ENCODE measurements at regions of chr17 and their contacts with region 1.

Region 1: DNA sequence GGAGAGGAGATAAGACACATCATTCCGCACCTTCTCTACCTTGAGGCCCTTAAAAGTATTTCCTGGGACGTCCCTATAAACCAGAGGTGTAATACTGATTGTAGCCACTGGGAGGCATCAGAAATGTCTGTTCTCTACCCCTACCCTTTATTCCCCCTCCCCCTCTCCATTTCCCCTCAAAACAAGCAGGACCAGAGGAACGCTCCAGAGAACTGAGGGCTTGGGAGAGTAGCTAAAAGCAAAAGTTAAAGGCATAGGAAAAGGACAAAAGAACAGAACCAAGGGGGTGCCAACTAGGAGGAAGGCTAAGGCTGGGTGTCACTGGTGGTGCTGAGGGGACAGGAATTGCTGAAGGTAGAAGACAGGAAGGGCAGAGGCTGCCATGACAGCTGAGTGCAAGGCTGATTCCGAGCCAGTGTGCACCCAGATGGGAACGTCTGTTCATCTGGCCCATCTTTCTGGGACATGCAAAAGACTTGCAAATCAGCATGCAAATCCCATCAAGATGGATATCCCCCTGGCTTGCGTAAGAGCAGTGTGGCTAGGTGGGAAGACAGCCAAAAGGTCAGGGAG is 6.7 kb downstream of the CAMTA2 start:
- DNase-seq: peak; percentile 65 to 73
- ATAC-seq: peak; percentile 78 to 84
- H3K4me3 ChIP-seq: no peak overlapping the region
- H3K27ac ChIP-seq: no peak overlapping the region
- H3K4me1 ChIP-seq: peaks cover 2% of the 10 kb centered on the region; the same call in 2 of the 3 replicates
- CTCF ChIP-seq: peak; percentile 73
- EP300 ChIP-seq: no peak
- POLR2A ChIP-seq: no peak
- RAD21 ChIP-seq: peak; percentile 55 to 63

Region 2: GRCh38 chr17:4939796-4940624 is 40.7 kb before region 1 on chr17 and contains the starts of genes RNF167 and SLC25A11:
- CTCF ChIA-PET with region 1: interaction called, 33 read pairs
- POLR2A ChIA-PET with region 1: no interaction called
- DNase-seq: peak; percentile 99 to 100
- ATAC-seq: peak; percentile 80 to 81
- H3K4me3 ChIP-seq: peak within 1 kb of the TSS; percentile 85
- H3K27ac ChIP-seq: peak within 1 kb of the TSS; percentile 89 to 93
- H3K4me1 ChIP-seq: peaks cover 49% of the 10 kb centered on the region
- CTCF ChIP-seq: no peak
- EP300 ChIP-seq: no peak
- POLR2A ChIP-seq: peak; percentile 91
- RAD21 ChIP-seq: 0 out of 5 replicates have a peak, but pooled peaks of 1 of the 2 experiments have one; percentile 5
- polyA plus RNA-seq, gene RNF167: 98.7 and 110 TPM in 2 replicates
- polyA plus RNA-seq, gene SLC25A11: 60.2 and 64.4 TPM in 2 replicates

Region 3: GRCh38 chr17:4956493-4957061 is 24.2 kb before region 1 on chr17:
- CTCF ChIA-PET with region 1: interaction called, 28 read pairs
- POLR2A ChIA-PET with region 1: no interaction called
- DNase-seq: no peak
- ATAC-seq: no peak
- H3K4me3 ChIP-seq: no peak overlapping the region
- H3K27ac ChIP-seq: no peak overlapping the region
- H3K4me1 ChIP-seq: peaks cover 17% of the 10 kb centered on the region
- CTCF ChIP-seq: peak; percentile 24; the same call in 2 of the 3 replicates
- EP300 ChIP-seq: no peak
- POLR2A ChIP-seq: no peak
- RAD21 ChIP-seq: no peak

Region 4: DNA sequence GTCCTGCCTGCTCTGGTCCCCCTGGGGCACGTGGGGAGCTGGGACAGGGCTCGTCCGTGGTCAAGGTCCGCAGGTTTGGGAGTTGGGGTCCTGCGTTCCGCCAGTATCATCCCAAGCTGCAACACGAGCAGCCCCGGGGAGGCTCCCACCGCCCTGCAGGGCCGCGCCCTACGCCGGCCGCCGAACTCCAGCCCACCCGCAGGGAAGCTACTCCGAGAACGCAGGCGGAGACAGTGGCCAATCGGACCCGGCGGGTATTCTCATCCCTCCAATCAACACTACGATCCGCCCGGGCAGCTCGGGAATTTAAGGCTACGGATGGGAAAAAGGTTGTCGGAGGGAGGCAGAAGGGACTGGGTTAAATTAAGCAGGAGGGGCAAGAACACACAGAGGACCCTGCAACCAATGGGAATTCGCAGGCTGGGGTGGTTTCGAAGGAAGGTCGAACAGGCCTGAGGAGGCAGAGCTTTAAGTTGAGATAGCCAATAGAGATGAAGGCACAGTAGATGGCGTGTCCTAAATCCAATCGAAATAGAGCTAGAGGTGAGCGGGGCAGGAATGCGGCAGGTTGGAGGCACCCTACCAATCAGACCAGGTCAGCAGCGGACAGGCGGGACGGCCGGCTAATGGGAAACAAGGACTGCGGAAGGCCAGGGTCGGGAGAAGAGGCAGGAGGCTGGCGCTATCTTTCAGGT is 13.7 kb before region 1 on chr17:
- CTCF ChIA-PET with region 1: interaction called, 148 read pairs
- POLR2A ChIA-PET with region 1: interaction called, 11 read pairs
- DNase-seq: peak; percentile 100
- ATAC-seq: peak; percentile 89 to 95
- H3K4me3 ChIP-seq: peak overlapping the region; percentile 63
- H3K27ac ChIP-seq: peak overlapping the region; percentile 94 to 95
- H3K4me1 ChIP-seq: peaks cover 21% of the 10 kb centered on the region
- CTCF ChIP-seq: no peak
- EP300 ChIP-seq: no peak
- POLR2A ChIP-seq: peak; percentile 59; the same call in 1 of the 2 replicates
- RAD21 ChIP-seq: peak in 1 of 2 experiments; percentile 10; a peak in 1 of 5 replicates

Region 5: DNA sequence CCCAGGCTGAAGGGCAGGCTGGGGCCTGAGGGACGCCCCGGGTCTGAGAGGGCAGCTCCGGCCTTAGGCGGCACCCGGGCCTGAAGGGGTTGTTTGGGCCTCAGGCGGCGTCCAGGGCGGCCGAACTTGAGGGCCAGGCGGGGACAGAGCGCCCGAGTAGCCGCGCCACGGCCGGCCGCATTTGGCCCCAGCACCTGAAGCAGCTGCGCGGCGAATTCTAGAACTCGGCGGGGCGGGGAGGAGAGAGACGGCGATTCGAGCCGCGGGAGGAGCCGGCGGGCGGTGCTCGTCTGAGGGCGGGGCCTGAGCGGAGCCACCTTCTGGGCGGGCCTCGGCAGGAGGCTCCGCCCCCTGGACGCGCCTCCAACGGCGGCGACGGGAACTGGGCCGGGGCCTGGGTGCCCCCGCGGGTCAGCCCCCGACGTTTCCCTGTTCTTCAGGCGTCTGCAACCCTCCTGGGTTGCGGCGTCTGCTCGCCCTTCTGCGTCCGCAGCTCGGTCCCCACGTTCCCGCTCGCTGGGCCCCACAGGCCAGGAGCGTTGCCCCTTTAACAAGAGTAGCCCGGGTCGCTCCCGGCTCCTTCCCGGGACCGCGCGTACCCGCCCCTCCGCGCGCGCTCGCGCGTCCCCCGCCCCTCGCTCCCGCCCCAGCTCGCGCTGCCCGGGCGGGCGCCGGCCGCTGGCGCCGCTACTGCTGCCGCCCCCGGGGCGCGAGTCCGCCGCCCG is 16.7 kb after region 1 on chr17 and contains the starts of genes INCA1 and KIF1C:
- CTCF ChIA-PET with region 1: interaction called, 30 read pairs
- POLR2A ChIA-PET with region 1: no interaction called
- DNase-seq: peak; percentile 91 to 98
- ATAC-seq: peak; percentile 86 to 93
- H3K4me3 ChIP-seq: peak within 1 kb of the TSS; percentile 95
- H3K27ac ChIP-seq: peak within 1 kb of the TSS; percentile 87 to 91
- H3K4me1 ChIP-seq: peaks cover 26% of the 10 kb centered on the region
- CTCF ChIP-seq: no peak
- EP300 ChIP-seq: no peak
- POLR2A ChIP-seq: peak; percentile 82
- RAD21 ChIP-seq: no peak
- polyA plus RNA-seq, gene INCA1: 0.66 and 0.86 TPM in 2 replicates
- polyA plus RNA-seq, gene KIF1C: 42.0 and 48.4 TPM in 2 replicates

Region 6: DNA sequence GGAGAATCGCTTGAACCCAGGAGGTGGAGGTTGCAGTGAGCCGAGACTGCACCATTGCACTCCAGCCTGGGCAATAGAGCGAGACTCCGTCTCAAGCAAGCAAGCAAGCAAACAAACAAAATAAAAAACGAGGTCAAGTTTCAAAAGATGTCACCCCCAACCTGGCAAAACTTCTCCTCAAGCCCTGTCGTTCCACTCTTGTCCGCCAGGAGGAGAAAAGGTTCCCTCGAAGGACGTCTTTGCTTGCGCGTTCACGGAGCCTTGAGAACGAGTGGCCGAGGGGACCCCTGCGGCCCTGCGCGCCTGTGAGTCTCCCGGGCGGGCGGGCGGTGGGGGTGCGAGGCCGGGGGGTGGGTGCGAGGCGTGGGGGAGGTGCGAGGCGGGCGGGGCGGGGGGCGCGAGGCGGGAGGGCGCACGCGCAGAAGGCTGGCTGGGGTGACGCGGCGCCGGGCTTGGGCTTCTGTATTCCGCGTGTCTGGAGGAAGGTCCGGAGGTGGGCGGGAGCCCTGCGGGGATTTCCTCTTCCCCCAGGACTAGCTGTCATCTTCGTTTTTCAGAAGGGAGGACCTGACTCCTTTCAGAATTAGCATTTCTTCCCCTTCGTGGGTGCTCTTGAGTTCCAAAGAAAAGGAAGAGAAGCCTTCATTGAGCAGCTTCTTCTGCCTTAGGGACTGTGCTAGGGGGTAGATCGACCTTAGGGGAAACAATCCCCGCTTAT is 50.8 kb after region 1 on chr17:
- CTCF ChIA-PET with region 1: interaction called, 11 read pairs
- POLR2A ChIA-PET with region 1: interaction called, 3 read pairs
- DNase-seq: peak; percentile 86
- ATAC-seq: peak; percentile 76 to 79
- H3K4me3 ChIP-seq: peak overlapping the region; percentile 42
- H3K27ac ChIP-seq: peak overlapping the region; percentile 70 to 90
- H3K4me1 ChIP-seq: peaks cover 3% of the 10 kb centered on the region; the same call in 1 of the 3 replicates
- CTCF ChIP-seq: peak; percentile 65
- EP300 ChIP-seq: no peak
- POLR2A ChIP-seq: 0 out of 2 replicates have a peak, but pooled peaks have one; percentile 10
- RAD21 ChIP-seq: peak; percentile 47 to 55; a peak in 4 of 5 replicates

Region 7: DNA sequence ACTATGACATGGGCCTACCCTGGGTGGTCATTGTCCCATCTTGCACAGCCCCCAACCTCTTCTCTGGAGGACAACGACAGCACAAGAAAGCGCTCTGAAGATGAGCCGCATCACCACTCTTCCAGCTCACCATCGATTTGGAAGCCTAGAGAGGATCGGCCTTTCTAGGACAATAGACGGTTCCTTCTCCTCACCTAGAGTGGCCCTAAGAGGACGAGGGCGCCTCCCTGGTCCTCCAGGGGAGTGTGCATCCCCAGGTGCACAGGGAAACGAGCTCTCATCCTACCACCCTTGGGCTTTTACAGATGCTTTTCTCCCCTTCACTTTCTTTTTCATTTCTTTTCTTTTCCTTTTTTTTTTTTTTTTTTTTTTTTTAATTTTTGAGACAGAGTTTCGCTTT is 74.8 kb after region 1 on chr17:
- CTCF ChIA-PET with region 1: interaction called, 69 read pairs
- POLR2A ChIA-PET with region 1: no interaction called
- DNase-seq: peak in 1 of 2 experiments; percentile 77
- ATAC-seq: peak in 1 of 2 experiments; percentile 79; a peak in 3 of 6 replicates
- H3K4me3 ChIP-seq: no peak overlapping the region
- H3K27ac ChIP-seq: no peak overlapping the region
- H3K4me1 ChIP-seq: no peaks in the 10 kb centered on the region
- CTCF ChIP-seq: no peak
- EP300 ChIP-seq: no peak
- POLR2A ChIP-seq: no peak
- RAD21 ChIP-seq: no peak